T-cell (primary cell): ENCODE measurements at regions of chr10 and their contacts with region 1.

Region 1: DNA sequence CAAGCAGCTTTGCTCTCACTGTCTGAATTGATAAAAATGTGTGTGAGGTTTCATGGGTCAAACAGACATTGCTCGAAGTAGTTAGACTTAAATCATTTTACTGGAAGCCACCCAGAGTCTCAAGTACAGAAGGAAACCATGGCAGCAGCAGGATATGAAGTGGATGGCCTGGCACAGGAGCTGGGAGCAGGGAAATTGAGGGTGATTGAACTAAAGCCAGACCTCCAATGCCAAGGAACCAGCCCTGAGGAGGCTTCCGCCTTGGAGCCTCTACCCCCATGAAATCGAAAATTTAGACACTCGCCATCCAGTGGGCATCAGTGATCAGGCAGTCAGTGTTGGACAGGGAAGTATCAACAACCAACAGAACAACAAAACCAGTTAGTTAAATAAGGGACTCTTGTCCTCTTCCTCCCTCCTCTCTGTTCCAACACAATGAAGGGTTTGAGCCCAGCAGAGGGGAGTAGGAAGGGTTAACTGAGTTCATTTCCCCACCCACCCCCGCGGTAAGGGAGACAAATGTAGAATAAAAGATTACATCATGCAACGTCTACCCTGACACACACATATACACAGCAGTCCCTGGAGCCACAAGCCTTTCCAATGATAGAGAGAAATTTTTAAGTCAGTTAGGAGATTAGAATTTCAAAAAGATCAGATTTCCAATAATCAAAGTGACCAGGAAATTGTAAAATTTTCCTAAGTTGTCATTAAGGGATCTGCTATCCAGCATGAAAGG is 156.3 kb downstream of the SLC16A9 start:
- DNase-seq: no peak
- ATAC-seq: no peak
- H3K4me3 ChIP-seq: no peak overlapping the region
- H3K4me3 Mint-ChIP-seq: no peak overlapping the region
- H3K27ac ChIP-seq: no peak overlapping the region
- H3K27ac Mint-ChIP-seq: no peak overlapping the region
- H3K4me1 ChIP-seq: no peaks in the 10 kb centered on the region
- H3K4me1 Mint-ChIP-seq: no peaks in the 10 kb centered on the region
- H3K27me3 ChIP-seq: no peaks in the 10 kb centered on the region
- H3K27me3 Mint-ChIP-seq: peaks cover 3 to 9% of the 10 kb centered on the region in 2 donors

Region 2: GRCh38 chr10:59536167-59536930 is 17.0 kb before region 1 on chr10:
- CTCF ChIA-PET with region 1: no interaction called
- POLR2A ChIA-PET with region 1: no interaction called
- DNase-seq: no peak
- ATAC-seq: no peak
- H3K4me3 ChIP-seq: no peak overlapping the region
- H3K4me3 Mint-ChIP-seq: no peak overlapping the region
- H3K27ac ChIP-seq: no peak overlapping the region
- H3K27ac Mint-ChIP-seq: no peak overlapping the region
- H3K4me1 ChIP-seq: no peaks in the 10 kb centered on the region
- H3K4me1 Mint-ChIP-seq: no peaks in the 10 kb centered on the region
- H3K27me3 ChIP-seq: no peaks in the 10 kb centered on the region
- H3K27me3 Mint-ChIP-seq: no peaks in the 10 kb centered on the region

Region 3: DNA sequence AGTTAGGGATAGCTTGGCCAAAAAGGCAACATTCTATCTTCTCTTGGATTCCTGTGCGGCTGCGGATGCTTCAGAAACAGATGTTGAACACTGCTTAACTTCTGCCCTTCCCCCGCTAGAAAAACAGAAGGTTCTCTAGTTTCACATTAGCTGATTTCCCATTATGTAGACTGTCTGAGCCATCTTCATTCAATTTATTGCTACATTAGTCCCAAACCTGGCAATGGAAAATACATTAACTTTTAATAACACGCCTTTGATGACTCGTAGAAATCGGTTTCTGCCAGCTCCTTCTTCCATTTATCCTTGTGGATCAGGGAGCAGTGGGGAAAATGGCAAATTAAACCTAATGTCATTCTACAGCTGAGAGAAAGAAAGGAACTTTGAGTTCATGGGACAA is 36.5 kb after region 1 on chr10:
- CTCF ChIA-PET with region 1: no interaction called
- POLR2A ChIA-PET with region 1: interaction called in 1 of 2 experiments, 10 read pairs
- DNase-seq: no peak
- ATAC-seq: no peak
- H3K4me3 ChIP-seq: no peak overlapping the region
- H3K4me3 Mint-ChIP-seq: no peak overlapping the region
- H3K27ac ChIP-seq: no peak overlapping the region
- H3K27ac Mint-ChIP-seq: no peak overlapping the region
- H3K4me1 ChIP-seq: no peaks in the 10 kb centered on the region
- H3K4me1 Mint-ChIP-seq: no peaks in the 10 kb centered on the region
- H3K27me3 ChIP-seq: peaks cover 0 to 14% of the 10 kb centered on the region in 2 experiments
- H3K27me3 Mint-ChIP-seq: peaks cover 0 to 5% of the 10 kb centered on the region in 2 donors